ENCODE measurements at regions of chr2 and their contacts with region 1.

Region 1: GRCh38 chr2:209556354-209556961 is 132.6 kb downstream of the MAP2 start:
- DNase-seq: peak in 1 of 4 donors; percentile 30
- ATAC-seq: peak; percentile 86
- H3K4me3 ChIP-seq: no peak overlapping the region
- H3K27ac ChIP-seq: no peak overlapping the region
- H3K4me1 ChIP-seq: no peaks in the 10 kb centered on the region
- H3K27me3 ChIP-seq: no peaks in the 10 kb centered on the region
- CTCF ChIP-seq: peak in 1 of 2 donors; percentile 34

Region 2: GRCh38 chr2:208939852-208940251 is 616.6 kb before region 1 on chr2:
- intact Hi-C with region 1: no loop called
- DNase-seq: no peak
- ATAC-seq: no peak
- H3K4me3 ChIP-seq: no peak overlapping the region
- H3K27ac ChIP-seq: no peak overlapping the region
- H3K4me1 ChIP-seq: no peaks in the 10 kb centered on the region
- H3K27me3 ChIP-seq: no peaks in the 10 kb centered on the region
- CTCF ChIP-seq: no peak

Region 3: DNA sequence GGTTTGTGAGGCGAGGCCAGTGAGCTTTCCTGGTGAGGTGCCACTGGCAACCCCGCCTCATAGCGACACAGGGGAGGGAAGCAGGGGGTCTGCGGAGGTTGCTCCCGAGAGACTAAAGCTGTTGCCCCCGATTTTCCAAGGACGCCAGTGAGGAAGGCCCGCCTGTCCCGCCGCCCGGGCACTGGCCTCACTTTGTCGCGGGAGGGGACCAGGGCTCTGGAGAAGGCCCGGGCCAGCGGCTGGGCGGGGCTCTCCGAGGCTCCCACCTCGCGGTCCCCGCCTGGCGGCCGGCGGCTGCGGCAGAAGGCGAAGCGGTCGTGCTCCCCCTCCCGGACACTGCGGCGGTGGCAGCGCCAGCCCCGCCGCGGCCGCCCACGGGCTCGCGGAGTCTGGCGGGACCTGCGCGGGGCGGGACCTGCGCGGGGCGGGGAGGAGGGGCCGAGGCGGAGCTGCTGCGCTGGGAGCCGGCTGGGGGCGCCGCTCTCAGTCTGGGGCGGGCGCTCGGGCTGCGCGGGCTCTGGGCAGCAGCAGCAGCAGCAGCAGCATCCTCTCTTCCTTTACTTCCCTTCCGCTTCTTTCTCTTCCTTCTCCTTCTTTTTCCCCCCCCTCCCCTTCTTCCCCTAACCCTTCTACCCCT is 132.8 kb before region 1 on chr2 and contains the start of gene MAP2:
- intact Hi-C with region 1: loop called in 1 of 2 experiments (anchors 10 kb)
- DNase-seq: peak; percentile 63 to 94 (median 86)
- ATAC-seq: peak; percentile 96
- H3K4me3 ChIP-seq: peak within 1 kb of the TSS; percentile 45 to 54
- H3K27ac ChIP-seq: peak within 1 kb of the TSS; percentile 17 to 37
- H3K4me1 ChIP-seq: peaks cover 0 to 8% of the 10 kb centered on the region in 2 donors
- H3K27me3 ChIP-seq: peaks cover 0 to 32% of the 10 kb centered on the region in 2 donors
- CTCF ChIP-seq: peak; percentile 78 to 85
- polyA plus RNA-seq, gene MAP2: 8.5 to 12.2 (median 10.4) TPM